Activated CD4-positive, alpha-beta T cell treated with anti-CD3 and anti-CD28 coated beads for 36 hours (primary cell): ENCODE measurements at regions of chr10 and their contacts with region 1.

Region 1: GRCh38 chr10:98134431-98135221 is at the start of gene R3HCC1L:
- DNase-seq: peak; percentile 97
- ATAC-seq: peak; percentile 95
- H3K4me3 Mint-ChIP-seq: peak within 1 kb of the TSS; percentile 86
- H3K27ac Mint-ChIP-seq: peak within 1 kb of the TSS; percentile 93
- H3K4me1 Mint-ChIP-seq: peaks cover 44% of the 10 kb centered on the region
- H3K27me3 Mint-ChIP-seq: no peaks in the 10 kb centered on the region
- total RNA-seq, gene R3HCC1L: 13.5 to 16.8 TPM

Region 2: DNA sequence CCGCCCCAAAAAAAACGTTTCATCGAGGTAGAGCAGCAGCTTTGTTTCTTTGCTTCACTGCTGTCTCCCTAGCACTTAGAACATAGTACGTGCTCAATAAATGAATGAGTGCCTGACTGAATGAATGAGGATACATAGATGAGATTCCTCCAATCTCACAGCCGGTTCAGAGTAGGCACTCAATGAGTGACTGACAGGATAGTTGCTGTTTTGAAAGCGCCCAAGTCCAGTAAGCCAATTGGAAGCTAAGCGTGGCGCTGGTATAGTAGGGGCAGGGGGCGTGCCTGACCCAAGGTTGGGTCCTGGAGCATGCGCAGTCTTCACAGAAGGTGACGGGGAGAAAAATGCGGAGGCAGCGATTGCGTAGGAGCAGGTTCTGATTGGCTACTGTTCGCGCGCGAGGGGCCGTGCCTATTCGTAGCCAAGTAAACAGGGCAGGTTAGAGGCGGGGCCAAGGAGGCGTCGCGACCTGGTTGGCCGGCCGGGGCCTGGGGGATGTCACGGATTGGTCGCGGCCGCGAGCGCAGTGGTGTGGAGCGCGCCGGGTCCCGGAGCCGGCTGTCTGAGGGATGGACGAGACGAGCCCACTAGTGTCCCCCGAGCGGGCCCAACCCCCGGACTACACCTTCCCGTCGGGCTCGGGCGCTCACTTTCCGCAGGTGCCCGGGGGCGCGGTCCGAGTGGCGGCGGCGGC is 494.3 kb before region 1 on chr10 and contains the start of gene PI4K2A:
- CTCF ChIA-PET with region 1: interaction called, 3 read pairs
- POLR2A ChIA-PET with region 1: no interaction called
- intact Hi-C with region 1: loop called in 1 of 2 experiments (anchors 2 kb)
- DNase-seq: peak; percentile 100
- ATAC-seq: peak; percentile 99
- H3K4me3 Mint-ChIP-seq: peak within 1 kb of the TSS; percentile 97
- H3K27ac Mint-ChIP-seq: peak within 1 kb of the TSS; percentile 93
- H3K4me1 Mint-ChIP-seq: peaks cover 18% of the 10 kb centered on the region
- H3K27me3 Mint-ChIP-seq: no peaks in the 10 kb centered on the region
- total RNA-seq, gene PI4K2A: 8.5 to 8.9 TPM

Region 3: GRCh38 chr10:98446661-98447221 is 312.1 kb after region 1 on chr10 and contains the start of gene HPS1:
- CTCF ChIA-PET with region 1: no interaction called
- POLR2A ChIA-PET with region 1: no interaction called
- intact Hi-C with region 1: loop called in 1 of 2 experiments (anchors 1 kb)
- DNase-seq: peak; percentile 92
- ATAC-seq: peak; percentile 93
- H3K4me3 Mint-ChIP-seq: peak within 1 kb of the TSS; percentile 93
- H3K27ac Mint-ChIP-seq: peak within 1 kb of the TSS; percentile 88
- H3K4me1 Mint-ChIP-seq: peaks cover 39% of the 10 kb centered on the region
- H3K27me3 Mint-ChIP-seq: peaks cover 5% of the 10 kb centered on the region
- total RNA-seq, gene HPS1: 51.9 to 53.2 TPM